K562 (cell line): ENCODE measurements at regions of chr7 and their contacts with region 1.

Region 1: GRCh38 chr7:11261519-11261958 is 287.9 kb downstream of the PHF14 start:
- DNase-seq: peak in 2 of 4 experiments; percentile 13 to 15
- ATAC-seq: peak; percentile 69
- H3K4me3 ChIP-seq: no peak overlapping the region
- H3K27ac ChIP-seq: no peak overlapping the region
- H3K4me1 ChIP-seq: peaks cover 0 to 3% of the 10 kb centered on the region in 2 experiments; a peak in 1 of 5 replicates
- H3K27me3 ChIP-seq: peaks cover 2 to 3% of the 10 kb centered on the region in 2 experiments; a peak in 1 of 5 replicates
- CTCF ChIP-seq: no peak
- EP300 ChIP-seq: no peak
- POLR2A ChIP-seq: no peak
- RAD21 ChIP-seq: no peak

Region 2: GRCh38 chr7:11203683-11204082 is 57.9 kb before region 1 on chr7:
- CTCF ChIA-PET with region 1: no interaction called
- POLR2A ChIA-PET with region 1: no interaction called
- in situ Hi-C with region 1: no loop called
- intact Hi-C with region 1: no loop called
- DNase-seq: no peak
- ATAC-seq: no peak
- H3K4me3 ChIP-seq: no peak overlapping the region
- H3K27ac ChIP-seq: no peak overlapping the region
- H3K4me1 ChIP-seq: no peaks in the 10 kb centered on the region
- H3K27me3 ChIP-seq: peaks cover 9 to 15% of the 10 kb centered on the region in 2 experiments; a peak in 3 of 5 replicates
- CTCF ChIP-seq: no peak
- EP300 ChIP-seq: no peak
- POLR2A ChIP-seq: no peak
- RAD21 ChIP-seq: no peak

Region 3: GRCh38 chr7:11249799-11250198 is 11.7 kb before region 1 on chr7:
- CTCF ChIA-PET with region 1: no interaction called
- POLR2A ChIA-PET with region 1: interaction called, 5 read pairs
- in situ Hi-C with region 1: no loop called
- intact Hi-C with region 1: loop called (anchors 1 kb)
- DNase-seq: no peak
- ATAC-seq: no peak
- H3K4me3 ChIP-seq: no peak overlapping the region
- H3K27ac ChIP-seq: no peak overlapping the region
- H3K4me1 ChIP-seq: no peaks in the 10 kb centered on the region
- H3K27me3 ChIP-seq: peaks cover 10 to 13% of the 10 kb centered on the region in 2 experiments; a peak in 2 of 5 replicates
- CTCF ChIP-seq: no peak
- EP300 ChIP-seq: no peak
- POLR2A ChIP-seq: no peak
- RAD21 ChIP-seq: no peak

Region 4: GRCh38 chr7:11373546-11374142 is 112.1 kb after region 1 on chr7:
- CTCF ChIA-PET with region 1: no interaction called
- POLR2A ChIA-PET with region 1: no interaction called
- in situ Hi-C with region 1: no loop called
- intact Hi-C with region 1: no loop called
- DNase-seq: peak; percentile 9 to 17 (median 16)
- ATAC-seq: peak; percentile 58; the same call in 2 of the 3 replicates
- H3K4me3 ChIP-seq: no peak overlapping the region
- H3K27ac ChIP-seq: no peak overlapping the region
- H3K4me1 ChIP-seq: no peaks in the 10 kb centered on the region
- H3K27me3 ChIP-seq: no peaks in the 10 kb centered on the region
- CTCF ChIP-seq: peak in 1 of 3 experiments; percentile 50; a peak in 4 of 6 replicates
- EP300 ChIP-seq: no peak
- POLR2A ChIP-seq: no peak
- RAD21 ChIP-seq: peak; percentile 9 to 48; a peak in 2 of 4 replicates